Activated CD4-positive, alpha-beta memory T cell treated with anti-CD3 and anti-CD28 coated beads for 36 hours (primary cell): ENCODE measurements at regions of chr2 and their contacts with region 1.

Region 1: DNA sequence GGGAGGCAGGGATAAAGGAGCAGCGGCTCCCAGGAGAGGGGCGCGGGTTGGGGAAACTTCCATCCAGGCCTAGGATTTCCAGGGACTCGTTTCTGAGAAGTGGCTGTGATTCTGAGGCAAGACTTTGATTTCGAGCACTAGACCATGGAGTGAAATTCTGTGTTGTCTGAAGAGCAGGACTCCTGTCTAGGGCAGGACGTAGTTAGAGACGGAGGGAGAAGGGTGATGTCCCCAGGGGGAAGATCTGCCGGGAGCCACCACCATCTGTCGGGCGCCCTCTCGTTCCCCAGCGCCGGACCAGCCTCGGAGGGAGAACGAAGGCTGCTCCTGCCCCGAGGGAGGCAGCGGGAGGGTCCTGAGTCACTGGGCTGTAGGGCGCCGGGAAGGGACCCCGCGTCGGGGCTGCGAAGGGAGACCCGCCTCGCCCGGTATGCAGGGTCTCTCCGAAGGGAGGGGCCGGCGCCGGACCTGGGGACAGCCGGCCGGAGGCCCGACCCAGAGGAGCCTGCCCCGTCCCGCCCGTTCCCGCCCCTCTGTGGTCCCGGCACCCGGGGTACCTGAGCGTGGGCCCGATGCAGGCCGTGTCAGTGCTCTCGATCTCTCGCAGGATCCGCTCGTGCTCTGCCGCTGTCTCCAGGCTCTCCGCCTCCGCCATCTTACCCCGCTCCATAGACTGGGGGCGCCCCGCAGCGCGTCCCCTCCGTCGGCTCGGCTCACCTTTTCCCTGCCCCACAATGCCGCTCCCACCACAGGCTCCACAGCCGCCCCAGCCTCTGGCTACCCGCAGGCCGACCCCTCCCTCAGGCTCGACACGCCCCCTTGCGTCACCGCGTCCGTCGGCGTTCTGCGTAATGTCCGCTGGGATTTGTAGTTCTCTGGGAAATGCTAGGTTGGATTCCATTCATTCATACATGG is at the start of gene EXOC6B:
- DNase-seq: peak; percentile 89
- H3K4me3 Mint-ChIP-seq: peak within 1 kb of the TSS; percentile 83
- H3K27ac Mint-ChIP-seq: peak within 1 kb of the TSS; percentile 2
- H3K4me1 Mint-ChIP-seq: peaks cover 38% of the 10 kb centered on the region
- H3K27me3 Mint-ChIP-seq: no peaks in the 10 kb centered on the region
- total RNA-seq, gene EXOC6B: 8.5 to 8.6 TPM

Region 2: GRCh38 chr2:72770879-72771461 is 54.5 kb before region 1 on chr2:
- CTCF ChIA-PET with region 1: no interaction called
- POLR2A ChIA-PET with region 1: no interaction called
- intact Hi-C with region 1: loop called (anchors 2 kb)
- DNase-seq: peak; percentile 38
- H3K4me3 Mint-ChIP-seq: no peak overlapping the region
- H3K27ac Mint-ChIP-seq: no peak overlapping the region
- H3K4me1 Mint-ChIP-seq: no peaks in the 10 kb centered on the region
- H3K27me3 Mint-ChIP-seq: no peaks in the 10 kb centered on the region

Region 3: GRCh38 chr2:72778410-72778809 is 47.1 kb before region 1 on chr2:
- CTCF ChIA-PET with region 1: no interaction called
- POLR2A ChIA-PET with region 1: no interaction called
- intact Hi-C with region 1: loop called (anchors 2 kb)
- DNase-seq: no peak
- H3K4me3 Mint-ChIP-seq: no peak overlapping the region
- H3K27ac Mint-ChIP-seq: no peak overlapping the region
- H3K4me1 Mint-ChIP-seq: peaks cover 7% of the 10 kb centered on the region
- H3K27me3 Mint-ChIP-seq: no peaks in the 10 kb centered on the region